Heart left ventricle (tissue), 16 donors: ENCODE measurements at regions of chr19 and their contacts with region 1.

Region 1: GRCh38 chr19:36489118-36489919 is at the start of gene ZNF566:
- DNase-seq: peak; percentile 91 to 94 (median 92)
- ATAC-seq: peak; percentile 96 to 98 (median 98)
- H3K4me3 ChIP-seq: peak within 1 kb of the TSS; percentile 62 to 94 (median 82)
- H3K27ac ChIP-seq: peak within 1 kb of the TSS; percentile 89 to 99 (median 97)
- H3K4me1 ChIP-seq: peaks cover 0 to 21% (median 10%) of the 10 kb centered on the region in 12 donors
- H3K27me3 ChIP-seq: no peaks in the 10 kb centered on the region
- CTCF ChIP-seq: peak in 2 of 12 donors; percentile 10 to 27
- POLR2A ChIP-seq: peak in 1 of 2 donors; percentile 49
- total RNA-seq, gene ZNF566: 6.6 to 14.0 (median 8.4) TPM

Region 2: DNA sequence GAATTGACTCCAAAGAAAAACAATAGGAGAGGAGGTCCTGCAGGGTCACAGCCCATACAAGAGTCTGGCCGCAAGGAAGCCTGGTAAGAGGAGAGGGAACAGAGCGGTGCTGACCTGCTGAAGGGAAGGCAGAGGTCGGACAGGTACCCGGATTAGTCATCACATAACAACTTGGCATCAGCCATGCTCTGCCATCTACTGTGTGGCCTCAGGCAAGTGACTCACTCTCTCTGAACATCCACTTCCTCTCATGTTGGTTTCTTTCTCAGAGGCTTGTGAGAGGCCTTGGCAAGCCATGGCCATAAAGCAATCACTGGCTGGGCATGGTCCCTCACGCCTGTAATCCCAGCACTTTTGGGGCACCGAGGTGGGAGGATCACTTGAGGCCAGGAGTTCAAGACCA is 356.8 kb before region 1 on chr19:
- intact Hi-C with region 1: loop called in 2 of 10 experiments (anchors 2 to 10 kb)
- DNase-seq: no peak
- ATAC-seq: no peak
- H3K4me3 ChIP-seq: no peak overlapping the region
- H3K27ac ChIP-seq: peak overlapping the region in 1 of 12 donors; percentile 61
- H3K4me1 ChIP-seq: peaks cover 0 to 54% (median 11%) of the 10 kb centered on the region in 12 donors
- H3K27me3 ChIP-seq: no peaks in the 10 kb centered on the region
- CTCF ChIP-seq: no peak
- POLR2A ChIP-seq: no peak

Region 3: GRCh38 chr19:36182612-36183244 is 306.6 kb before region 1 on chr19:
- intact Hi-C with region 1: loop called in 1 of 10 experiments (anchors 10 kb)
- DNase-seq: no peak
- ATAC-seq: peak in 3 of 4 donors; percentile 23 to 34 (median 24)
- H3K4me3 ChIP-seq: no peak overlapping the region
- H3K27ac ChIP-seq: peak overlapping the region in 6 of 12 donors; percentile 50 to 75 (median 62)
- H3K4me1 ChIP-seq: peaks cover 0 to 9% (median 0%) of the 10 kb centered on the region in 12 donors
- H3K27me3 ChIP-seq: no peaks in the 10 kb centered on the region
- CTCF ChIP-seq: no peak
- POLR2A ChIP-seq: no peak

Region 4: DNA sequence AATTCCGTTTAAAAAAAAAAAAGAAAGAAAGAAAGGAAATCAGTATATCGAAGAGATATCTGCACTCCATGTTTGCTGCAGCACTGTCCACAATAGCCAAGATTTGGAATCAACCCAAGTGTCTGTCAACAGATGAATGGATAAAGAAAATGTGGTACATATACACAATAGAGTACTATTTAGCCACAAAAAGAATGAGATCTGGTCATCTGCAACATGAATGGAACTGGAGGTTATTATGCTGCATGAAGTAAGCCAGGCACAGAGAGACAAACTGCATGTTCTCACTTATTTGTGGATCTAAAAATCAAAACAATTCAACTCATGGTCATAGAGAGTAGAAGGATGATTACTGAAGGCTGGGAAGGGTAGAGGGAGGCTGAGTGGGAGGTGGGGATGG is 291.2 kb before region 1 on chr19:
- intact Hi-C with region 1: loop called in 2 of 10 experiments (anchors 5 kb)
- DNase-seq: no peak
- ATAC-seq: no peak
- H3K4me3 ChIP-seq: no peak overlapping the region
- H3K27ac ChIP-seq: no peak overlapping the region
- H3K4me1 ChIP-seq: no peaks in the 10 kb centered on the region
- H3K27me3 ChIP-seq: no peaks in the 10 kb centered on the region
- CTCF ChIP-seq: no peak
- POLR2A ChIP-seq: no peak

Region 5: DNA sequence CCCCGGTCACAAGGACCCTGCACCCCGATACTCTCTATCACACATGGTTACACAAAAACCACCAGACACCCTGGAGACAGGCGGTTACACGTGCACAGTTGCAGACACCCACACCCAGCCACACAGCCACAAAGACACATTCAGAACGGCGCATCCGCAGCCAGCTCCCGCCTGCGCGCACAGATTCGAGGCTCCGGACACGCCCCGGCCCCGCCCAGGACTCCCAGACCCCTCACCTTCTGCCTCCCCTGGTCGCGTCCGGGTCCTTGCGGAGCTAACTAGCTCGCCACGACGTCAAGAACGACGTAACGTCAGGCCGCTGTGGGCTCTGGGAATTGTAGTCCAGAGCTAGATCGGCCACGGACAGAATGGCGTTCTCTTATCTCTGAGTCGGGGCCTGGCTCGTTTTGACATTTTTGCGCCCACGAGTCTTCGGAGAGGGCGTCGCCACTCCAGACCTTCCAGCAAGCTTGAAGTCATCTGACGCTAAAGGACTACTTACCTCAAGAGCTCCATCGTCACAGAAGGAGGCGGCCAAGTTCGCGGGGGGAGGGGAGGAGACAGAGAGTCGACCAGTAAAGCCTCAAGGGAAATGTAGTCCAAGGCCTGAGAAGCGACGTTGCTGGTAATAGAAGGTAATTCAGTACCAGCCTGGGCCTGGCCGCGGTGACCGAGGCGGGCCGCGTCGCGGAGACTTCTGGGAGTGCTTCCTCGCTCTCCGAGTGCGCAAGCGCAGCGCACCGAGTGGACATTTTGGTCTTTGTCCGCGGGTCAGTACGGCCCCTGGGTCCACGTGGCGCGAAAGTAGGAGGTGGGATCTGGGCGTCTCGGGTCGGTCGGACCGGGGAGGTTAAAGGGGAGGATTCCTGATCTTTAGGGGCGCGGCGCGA is 274.7 kb before region 1 on chr19 and contains the starts of genes ZNF146 and ZNF565:
- intact Hi-C with region 1: loop called in 2 of 10 experiments (anchors 10 kb)
- DNase-seq: peak; percentile 97 to 99 (median 99)
- ATAC-seq: peak; percentile 96 to 98 (median 97)
- H3K4me3 ChIP-seq: peak within 1 kb of the TSS; percentile 54 to 92 (median 75)
- H3K27ac ChIP-seq: peak within 1 kb of the TSS; percentile 62 to 98 (median 96)
- H3K4me1 ChIP-seq: peaks cover 0 to 34% (median 13%) of the 10 kb centered on the region in 12 donors
- H3K27me3 ChIP-seq: no peaks in the 10 kb centered on the region
- CTCF ChIP-seq: peak in 5 of 12 donors; percentile 5 to 37 (median 13)
- POLR2A ChIP-seq: peak in 1 of 2 donors; percentile 71
- total RNA-seq, gene ZNF146: 28.2 to 53.7 (median 35.1) TPM
- total RNA-seq, gene ZNF565: 2.3 to 4.3 (median 3.0) TPM

Region 6: DNA sequence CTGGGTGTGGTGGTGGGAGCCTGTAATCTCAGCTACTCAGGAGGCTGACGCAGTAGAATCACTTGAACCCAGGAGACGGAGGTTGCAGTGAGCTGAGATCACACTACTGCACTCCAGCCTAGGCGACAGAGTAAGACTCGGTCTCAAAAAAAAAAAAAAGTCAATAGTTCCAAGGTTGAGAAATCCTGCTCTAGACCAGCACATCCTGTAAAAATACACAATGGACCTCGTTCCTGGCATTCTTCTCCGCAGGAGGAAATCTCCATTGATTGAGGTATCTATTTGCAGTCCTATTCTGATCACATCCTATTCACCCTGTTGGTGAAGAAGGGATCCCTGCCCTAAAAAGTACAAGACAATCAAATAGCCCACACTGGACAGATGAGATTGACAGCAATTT is 125.5 kb before region 1 on chr19:
- intact Hi-C with region 1: no loop called
- DNase-seq: no peak
- ATAC-seq: no peak
- H3K4me3 ChIP-seq: no peak overlapping the region
- H3K27ac ChIP-seq: peak overlapping the region in 1 of 12 donors; percentile 7
- H3K4me1 ChIP-seq: peaks cover 0 to 3% (median 0%) of the 10 kb centered on the region in 12 donors
- H3K27me3 ChIP-seq: no peaks in the 10 kb centered on the region
- CTCF ChIP-seq: no peak
- POLR2A ChIP-seq: no peak

Region 7: GRCh38 chr19:36378625-36379509 is 110.5 kb before region 1 on chr19 and contains the start of gene ZFP14:
- intact Hi-C with region 1: loop called in 3 of 10 experiments (anchors 2 to 10 kb)
- DNase-seq: peak; percentile 94 to 97 (median 96)
- ATAC-seq: peak; percentile 96 to 99 (median 99)
- H3K4me3 ChIP-seq: peak within 1 kb of the TSS; percentile 32 to 98 (median 88)
- H3K27ac ChIP-seq: peak within 1 kb of the TSS; percentile 62 to 93 (median 86)
- H3K4me1 ChIP-seq: peaks cover 0 to 20% (median 11%) of the 10 kb centered on the region in 12 donors
- H3K27me3 ChIP-seq: no peaks in the 10 kb centered on the region
- CTCF ChIP-seq: peak in 6 of 12 donors; percentile 12 to 41 (median 20)
- POLR2A ChIP-seq: peak in 1 of 2 donors; percentile 93
- total RNA-seq, gene ZFP14: 1.3 to 5.1 (median 2.2) TPM

Region 8: DNA sequence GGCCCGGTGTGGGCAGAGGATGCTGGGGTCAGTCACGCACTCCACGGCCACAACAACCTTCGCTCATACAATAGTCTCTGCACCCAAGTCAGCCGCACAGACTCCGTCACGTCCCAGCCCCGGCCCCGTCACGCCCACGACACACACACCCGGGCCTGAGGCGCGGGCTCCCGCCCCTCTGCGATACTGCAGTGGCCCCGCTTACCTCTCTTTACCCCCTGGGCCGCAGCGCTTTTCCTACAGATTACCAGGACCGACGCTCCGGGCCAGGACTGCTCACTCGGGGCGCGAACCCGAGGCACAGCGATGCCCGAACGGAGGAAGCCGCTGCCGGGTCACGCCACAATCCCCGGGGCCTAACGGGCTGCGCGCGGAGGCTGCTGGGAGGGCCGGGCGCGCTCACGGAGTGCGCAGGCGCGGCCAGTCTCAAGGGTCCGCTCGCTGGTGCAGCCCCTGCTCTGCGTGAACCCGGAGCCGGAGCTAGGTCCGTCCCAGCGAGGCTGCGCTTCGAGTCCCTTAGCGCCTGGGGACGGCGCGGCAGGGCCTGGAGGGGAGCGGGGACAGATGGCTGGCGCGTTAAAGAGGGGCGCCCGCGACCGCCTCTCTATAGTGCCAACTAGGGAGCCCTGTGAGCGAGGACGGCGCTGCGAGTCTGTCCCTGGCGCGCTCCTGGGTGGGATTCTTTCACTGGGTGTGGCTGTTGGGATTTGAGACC is 70.9 kb before region 1 on chr19 and contains the start of gene ZFP82:
- intact Hi-C with region 1: loop called in 5 of 10 experiments (anchors 2 to 10 kb)
- DNase-seq: peak; percentile 87 to 93 (median 89)
- ATAC-seq: peak; percentile 93 to 98 (median 98)
- H3K4me3 ChIP-seq: peak within 1 kb of the TSS; percentile 60 to 95 (median 76)
- H3K27ac ChIP-seq: peak within 1 kb of the TSS; percentile 80 to 96 (median 90)
- H3K4me1 ChIP-seq: peaks cover 5 to 24% (median 15%) of the 10 kb centered on the region in 12 donors
- H3K27me3 ChIP-seq: no peaks in the 10 kb centered on the region
- CTCF ChIP-seq: no peak
- POLR2A ChIP-seq: peak in 1 of 2 donors; percentile 82
- total RNA-seq, gene ZFP82: 3.4 to 5.3 (median 4.0) TPM

Region 9: GRCh38 chr19:36514012-36514612 is 24.8 kb after region 1 on chr19:
- intact Hi-C with region 1: no loop called
- DNase-seq: no peak
- ATAC-seq: no peak
- H3K4me3 ChIP-seq: no peak overlapping the region
- H3K27ac ChIP-seq: no peak overlapping the region
- H3K4me1 ChIP-seq: no peaks in the 10 kb centered on the region
- H3K27me3 ChIP-seq: no peaks in the 10 kb centered on the region
- CTCF ChIP-seq: no peak
- POLR2A ChIP-seq: no peak

Region 10: GRCh38 chr19:36528194-36528920 is 39.0 kb after region 1 on chr19 and contains the start of gene ZNF260:
- intact Hi-C with region 1: no loop called
- DNase-seq: peak; percentile 97 to 99 (median 98)
- ATAC-seq: peak; percentile 99
- H3K4me3 ChIP-seq: peak within 1 kb of the TSS; percentile 40 to 89 (median 74)
- H3K27ac ChIP-seq: peak within 1 kb of the TSS; percentile 73 to 99 (median 94)
- H3K4me1 ChIP-seq: peaks cover 0 to 26% (median 15%) of the 10 kb centered on the region in 12 donors
- H3K27me3 ChIP-seq: no peaks in the 10 kb centered on the region
- CTCF ChIP-seq: peak in 3 of 12 donors; percentile 10 to 19 (median 16)
- POLR2A ChIP-seq: peak in 1 of 2 donors; percentile 48
- total RNA-seq, gene ZNF260: 5.2 to 13.7 (median 8.5) TPM

Region 11: DNA sequence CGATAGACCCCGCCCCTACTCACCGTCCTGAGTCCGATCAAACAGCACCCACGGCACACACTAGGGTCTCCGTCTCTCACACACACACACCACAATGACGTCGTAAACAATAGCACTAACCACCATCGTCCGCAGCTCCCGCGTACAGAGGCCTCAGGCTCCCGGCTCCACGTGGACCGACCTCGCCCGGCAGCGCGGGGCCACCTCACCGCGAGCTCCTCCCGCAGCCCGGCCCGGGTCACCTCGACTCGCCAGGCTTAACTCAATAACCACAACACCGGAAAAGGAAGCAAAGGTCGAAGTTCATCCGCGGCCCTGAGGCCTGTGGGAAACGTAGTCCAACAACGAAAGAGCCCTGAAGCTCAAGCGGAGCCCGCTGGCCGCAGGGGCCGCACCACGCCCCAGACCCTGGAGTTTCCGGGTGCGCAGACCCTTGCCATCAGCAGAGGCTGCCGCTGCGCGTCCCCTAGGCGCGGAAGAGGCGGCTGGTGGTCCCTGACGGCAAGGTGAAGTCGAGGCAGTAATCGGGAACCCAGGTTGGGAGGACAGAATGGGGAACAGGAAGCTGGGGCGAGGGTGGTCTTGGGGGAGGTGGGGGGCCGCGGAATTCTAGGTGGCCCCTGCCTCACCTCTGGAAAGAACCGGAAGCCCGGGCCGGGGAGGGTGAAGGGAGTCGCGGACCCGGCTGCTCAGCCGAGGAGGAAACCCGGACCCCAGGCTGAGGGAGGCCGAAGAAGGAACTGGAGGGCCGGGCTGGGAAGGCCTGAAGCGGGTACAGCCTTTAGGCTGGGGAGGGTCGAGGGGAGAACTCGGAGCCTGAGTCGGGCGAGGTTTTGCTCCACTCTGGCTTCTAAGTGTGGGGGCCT is 83.9 kb after region 1 on chr19 and contains the start of gene ZNF529:
- intact Hi-C with region 1: no loop called
- DNase-seq: peak; percentile 90 to 92 (median 91)
- ATAC-seq: peak; percentile 94 to 99 (median 99)
- H3K4me3 ChIP-seq: peak within 1 kb of the TSS; percentile 55 to 93 (median 79)
- H3K27ac ChIP-seq: peak within 1 kb of the TSS; percentile 42 to 90 (median 86)
- H3K4me1 ChIP-seq: peaks cover 0 to 27% (median 20%) of the 10 kb centered on the region in 12 donors
- H3K27me3 ChIP-seq: no peaks in the 10 kb centered on the region
- CTCF ChIP-seq: no peak
- POLR2A ChIP-seq: peak; percentile 62 to 82
- total RNA-seq, gene ZNF529: 10.0 to 17.8 (median 13.5) TPM